ENCODE measurements at regions of chr16 and their contacts with region 1.

Region 1: DNA sequence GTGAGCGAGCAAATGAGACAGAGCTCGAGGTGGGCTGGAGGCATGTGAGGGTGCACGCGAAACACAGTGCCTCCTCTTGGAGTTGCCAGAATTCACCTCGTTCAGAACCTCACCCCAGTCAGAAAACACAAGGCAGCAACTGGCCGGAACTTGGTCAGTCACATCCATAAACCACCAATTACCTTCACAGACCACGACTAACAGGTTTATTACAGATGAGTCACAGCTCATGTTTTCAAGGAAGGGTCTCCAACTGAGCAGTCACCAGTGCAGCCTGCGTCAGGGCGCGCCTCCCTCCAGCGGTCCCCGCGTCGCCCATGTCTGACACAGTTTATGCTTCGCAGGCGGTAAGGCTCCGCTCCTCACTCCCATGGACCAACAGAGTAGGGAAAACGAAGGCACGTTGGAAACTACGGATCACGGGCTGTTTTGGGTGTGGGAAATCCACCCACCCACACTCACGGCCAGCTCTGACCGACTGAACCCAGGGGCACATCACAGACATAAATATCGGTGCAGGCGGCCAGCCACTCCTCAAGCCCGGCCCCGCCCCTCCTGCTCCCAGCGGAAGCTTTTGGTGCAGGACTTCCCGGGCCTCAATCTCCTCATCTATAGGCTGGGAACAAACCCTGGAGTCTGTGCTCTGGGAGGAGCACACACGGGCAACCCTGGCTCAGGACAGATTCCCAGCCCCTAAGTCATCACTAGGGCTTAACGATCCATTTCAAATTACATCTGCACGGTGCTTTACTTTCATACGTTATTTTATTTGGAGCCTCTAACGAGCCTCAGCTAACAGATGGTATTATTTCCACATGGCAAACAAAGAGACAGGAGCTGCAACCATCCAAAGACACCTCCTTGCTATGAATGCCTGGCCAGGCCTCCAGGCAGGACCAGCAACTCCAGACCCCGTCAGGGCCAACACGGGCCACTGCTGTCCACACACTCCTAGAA is 126.3 kb downstream of the ZNF778 start:
- DNase-seq: no peak
- H3K4me3 ChIP-seq: no peak overlapping the region
- H3K4me3 Mint-ChIP-seq: no peak overlapping the region
- H3K27ac Mint-ChIP-seq: peak overlapping the region; percentile 64
- H3K4me1 ChIP-seq: peaks cover 55% of the 10 kb centered on the region
- H3K4me1 Mint-ChIP-seq: peaks cover 58% of the 10 kb centered on the region
- H3K27me3 ChIP-seq: no peaks in the 10 kb centered on the region
- H3K27me3 Mint-ChIP-seq: no peaks in the 10 kb centered on the region
- CTCF ChIP-seq: no peak

Region 2: GRCh38 chr16:89300311-89300975 is 43.3 kb before region 1 on chr16:
- CTCF ChIA-PET with region 1: no interaction called
- POLR2A ChIA-PET with region 1: no interaction called
- intact Hi-C with region 1: no loop called
- DNase-seq: no peak
- H3K4me3 ChIP-seq: no peak overlapping the region
- H3K4me3 Mint-ChIP-seq: peak overlapping the region; percentile 4
- H3K27ac Mint-ChIP-seq: peak overlapping the region; percentile 41
- H3K4me1 ChIP-seq: no peaks in the 10 kb centered on the region
- H3K4me1 Mint-ChIP-seq: peaks cover 16% of the 10 kb centered on the region
- H3K27me3 ChIP-seq: no peaks in the 10 kb centered on the region
- H3K27me3 Mint-ChIP-seq: no peaks in the 10 kb centered on the region
- CTCF ChIP-seq: no peak

Region 3: GRCh38 chr16:89383082-89384003 is 39.6 kb after region 1 on chr16:
- CTCF ChIA-PET with region 1: no interaction called
- POLR2A ChIA-PET with region 1: no interaction called
- intact Hi-C with region 1: loop called (anchors 2 kb)
- DNase-seq: peak; percentile 69 to 73
- H3K4me3 ChIP-seq: no peak overlapping the region
- H3K4me3 Mint-ChIP-seq: peak overlapping the region; percentile 61
- H3K27ac Mint-ChIP-seq: peak overlapping the region; percentile 90
- H3K4me1 ChIP-seq: peaks cover 23% of the 10 kb centered on the region
- H3K4me1 Mint-ChIP-seq: peaks cover 52% of the 10 kb centered on the region
- H3K27me3 ChIP-seq: no peaks in the 10 kb centered on the region
- H3K27me3 Mint-ChIP-seq: no peaks in the 10 kb centered on the region
- CTCF ChIP-seq: peak in 1 of 2 experiments; percentile 39

Measured in Caco-2 (cell line).